Activated CD4-positive, alpha-beta T cell treated with anti-CD3 and anti-CD28 coated beads, Interleukin-2, amount 10 ng/mL, durations not matched to agents 24 days and 14 days (primary cell): ENCODE measurements at regions of chr6 and their contacts with region 1.

Region 1: DNA sequence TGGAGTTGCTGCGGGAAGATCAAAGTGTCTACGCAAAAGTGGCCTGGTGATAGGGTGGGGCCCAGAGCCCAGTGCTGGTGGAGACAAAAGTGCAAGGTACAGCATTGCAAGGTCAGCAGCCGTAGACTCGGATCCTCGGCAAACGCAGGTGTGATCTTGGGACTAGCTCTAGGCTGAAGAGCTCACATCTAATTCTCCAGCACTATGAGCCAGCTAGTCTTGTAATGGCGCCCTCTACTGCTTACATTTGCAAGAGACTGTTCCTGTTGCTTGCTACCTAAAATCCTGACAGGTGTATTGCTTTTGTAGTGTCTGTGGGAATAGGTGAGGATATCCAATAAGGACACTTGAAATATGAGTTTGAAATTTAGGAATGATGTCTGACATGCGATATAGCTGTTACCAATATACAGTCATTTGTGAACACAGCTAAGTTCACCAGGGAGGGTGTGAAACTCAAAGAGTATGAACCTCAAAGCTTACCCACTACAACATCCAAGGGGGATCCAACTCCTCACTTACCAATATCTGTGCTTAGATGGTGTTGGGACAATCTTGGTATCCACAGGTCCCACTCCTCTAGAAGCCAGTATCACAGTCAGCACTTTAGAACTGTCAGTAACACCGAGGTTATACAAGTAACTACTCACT is 58.4 kb downstream of the PDE7B start:
- DNase-seq: peak; percentile 90
- H3K4me3 Mint-ChIP-seq: no peak overlapping the region
- H3K27ac Mint-ChIP-seq: peak overlapping the region; percentile 41
- H3K4me1 Mint-ChIP-seq: peaks cover 31% of the 10 kb centered on the region
- H3K27me3 Mint-ChIP-seq: no peaks in the 10 kb centered on the region

Region 2: DNA sequence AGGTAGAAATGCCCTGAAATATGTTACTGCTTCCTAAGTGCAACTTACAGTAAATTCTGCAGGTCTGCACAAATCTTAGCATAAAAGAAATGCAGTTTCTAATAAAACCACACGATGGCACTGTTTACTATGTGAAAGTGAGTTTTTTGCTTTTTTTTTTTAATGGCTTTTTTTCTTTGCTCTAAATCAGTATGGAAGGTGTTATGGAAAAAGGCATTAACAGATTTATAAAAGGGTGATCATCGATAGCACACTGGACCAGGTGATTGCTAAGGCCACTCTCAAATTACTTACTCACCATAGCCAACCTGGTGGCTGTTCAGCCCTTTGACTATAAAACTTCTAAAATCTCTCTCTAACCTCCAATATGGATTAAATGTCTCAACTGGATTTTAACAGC is 458.2 kb before region 1 on chr6:
- intact Hi-C with region 1: loop called (anchors 2 kb)
- DNase-seq: peak; percentile 63
- H3K4me3 Mint-ChIP-seq: no peak overlapping the region
- H3K27ac Mint-ChIP-seq: no peak overlapping the region
- H3K4me1 Mint-ChIP-seq: peaks cover 6% of the 10 kb centered on the region
- H3K27me3 Mint-ChIP-seq: no peaks in the 10 kb centered on the region

Region 3: DNA sequence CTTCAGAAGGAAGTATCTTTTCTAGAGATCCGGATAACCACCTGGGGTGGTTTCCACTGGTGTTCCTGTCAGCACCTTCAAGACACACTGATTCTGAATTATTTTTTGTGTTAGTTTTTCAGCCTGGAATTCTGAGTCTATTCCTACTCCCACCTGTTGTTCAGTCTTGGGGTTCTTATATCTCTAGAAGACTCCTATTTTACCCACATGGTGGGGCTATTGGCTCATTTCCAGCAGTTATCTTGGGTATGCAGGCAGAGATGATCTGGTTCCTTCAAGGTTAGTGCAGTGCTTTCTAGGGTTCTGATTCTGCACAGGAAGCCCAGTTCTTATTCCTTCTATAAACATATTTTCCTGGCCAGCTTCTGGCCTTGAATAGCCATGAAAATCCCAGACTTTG is 234.0 kb before region 1 on chr6:
- intact Hi-C with region 1: loop called (anchors 1 kb)
- DNase-seq: peak; percentile 85
- H3K4me3 Mint-ChIP-seq: peak overlapping the region; percentile 32
- H3K27ac Mint-ChIP-seq: peak overlapping the region; percentile 74
- H3K4me1 Mint-ChIP-seq: peaks cover 39% of the 10 kb centered on the region
- H3K27me3 Mint-ChIP-seq: no peaks in the 10 kb centered on the region

Region 4: DNA sequence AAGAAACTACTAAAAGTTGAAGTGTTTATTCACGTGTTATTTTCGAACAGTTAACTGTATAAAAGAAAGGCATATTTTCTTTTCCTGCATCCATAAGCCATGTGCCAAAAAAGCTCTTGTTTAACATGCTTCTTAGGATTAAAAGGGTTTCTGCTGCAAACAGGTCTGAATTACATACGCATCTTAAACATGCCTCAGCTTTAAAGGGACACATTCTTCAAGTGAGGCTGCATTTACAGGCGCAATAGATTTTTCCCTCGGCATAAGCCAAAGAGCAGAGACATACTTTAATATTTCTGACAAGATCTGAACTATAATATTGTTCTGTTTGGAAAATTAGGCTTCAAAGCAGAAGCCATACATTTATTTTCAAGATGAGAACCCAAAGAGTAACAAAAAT is 19.0 kb before region 1 on chr6:
- intact Hi-C with region 1: no loop called
- DNase-seq: no peak
- H3K4me3 Mint-ChIP-seq: no peak overlapping the region
- H3K27ac Mint-ChIP-seq: no peak overlapping the region
- H3K4me1 Mint-ChIP-seq: peaks cover 5% of the 10 kb centered on the region
- H3K27me3 Mint-ChIP-seq: no peaks in the 10 kb centered on the region

Region 5: DNA sequence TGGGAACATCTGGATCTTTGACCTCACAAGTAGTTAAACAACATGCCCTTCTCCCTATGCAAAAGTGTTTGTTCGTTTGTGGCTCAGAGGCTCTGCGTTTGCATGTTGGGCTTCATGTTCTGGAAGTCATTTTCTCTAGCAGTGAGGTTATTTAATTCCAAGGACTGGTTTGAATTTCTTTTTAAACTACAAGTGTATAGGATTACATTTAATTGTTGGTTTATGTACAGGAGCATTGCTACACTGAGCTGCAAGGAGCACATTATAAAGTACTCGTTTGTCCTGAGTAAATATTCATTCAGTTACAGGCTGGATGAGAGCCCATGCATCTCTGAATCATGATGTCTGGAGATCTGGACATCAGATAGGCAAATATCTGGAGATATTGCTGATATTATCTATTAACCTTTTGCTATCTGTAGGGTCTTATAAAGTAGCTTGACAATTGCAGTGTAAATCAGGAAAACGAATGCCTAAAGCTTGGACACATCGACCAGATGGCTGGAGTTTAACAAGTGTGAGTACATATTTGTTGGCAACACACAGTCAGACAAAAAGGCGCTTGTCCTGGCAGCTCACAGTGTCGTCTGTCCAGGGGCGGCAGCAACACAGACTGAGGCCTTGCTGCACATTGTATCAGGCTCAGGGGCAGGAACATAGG is 26.2 kb after region 1 on chr6:
- intact Hi-C with region 1: no loop called
- DNase-seq: no peak
- H3K4me3 Mint-ChIP-seq: no peak overlapping the region
- H3K27ac Mint-ChIP-seq: no peak overlapping the region
- H3K4me1 Mint-ChIP-seq: peaks cover 13% of the 10 kb centered on the region
- H3K27me3 Mint-ChIP-seq: no peaks in the 10 kb centered on the region

Region 6: GRCh38 chr6:135994857-135995544 is 85.1 kb after region 1 on chr6:
- intact Hi-C with region 1: no loop called
- DNase-seq: no peak
- H3K4me3 Mint-ChIP-seq: no peak overlapping the region
- H3K27ac Mint-ChIP-seq: no peak overlapping the region
- H3K4me1 Mint-ChIP-seq: peaks cover 6% of the 10 kb centered on the region
- H3K27me3 Mint-ChIP-seq: no peaks in the 10 kb centered on the region

Region 7: GRCh38 chr6:137637121-137637520 is 1727.3 kb after region 1 on chr6:
- intact Hi-C with region 1: no loop called
- DNase-seq: no peak
- H3K4me3 Mint-ChIP-seq: no peak overlapping the region
- H3K27ac Mint-ChIP-seq: no peak overlapping the region
- H3K4me1 Mint-ChIP-seq: peaks cover 13% of the 10 kb centered on the region
- H3K27me3 Mint-ChIP-seq: peaks cover 5% of the 10 kb centered on the region